Endothelial cell of umbilical vein (primary cell): ENCODE measurements at regions of chr1 and their contacts with region 1.

Region 1: DNA sequence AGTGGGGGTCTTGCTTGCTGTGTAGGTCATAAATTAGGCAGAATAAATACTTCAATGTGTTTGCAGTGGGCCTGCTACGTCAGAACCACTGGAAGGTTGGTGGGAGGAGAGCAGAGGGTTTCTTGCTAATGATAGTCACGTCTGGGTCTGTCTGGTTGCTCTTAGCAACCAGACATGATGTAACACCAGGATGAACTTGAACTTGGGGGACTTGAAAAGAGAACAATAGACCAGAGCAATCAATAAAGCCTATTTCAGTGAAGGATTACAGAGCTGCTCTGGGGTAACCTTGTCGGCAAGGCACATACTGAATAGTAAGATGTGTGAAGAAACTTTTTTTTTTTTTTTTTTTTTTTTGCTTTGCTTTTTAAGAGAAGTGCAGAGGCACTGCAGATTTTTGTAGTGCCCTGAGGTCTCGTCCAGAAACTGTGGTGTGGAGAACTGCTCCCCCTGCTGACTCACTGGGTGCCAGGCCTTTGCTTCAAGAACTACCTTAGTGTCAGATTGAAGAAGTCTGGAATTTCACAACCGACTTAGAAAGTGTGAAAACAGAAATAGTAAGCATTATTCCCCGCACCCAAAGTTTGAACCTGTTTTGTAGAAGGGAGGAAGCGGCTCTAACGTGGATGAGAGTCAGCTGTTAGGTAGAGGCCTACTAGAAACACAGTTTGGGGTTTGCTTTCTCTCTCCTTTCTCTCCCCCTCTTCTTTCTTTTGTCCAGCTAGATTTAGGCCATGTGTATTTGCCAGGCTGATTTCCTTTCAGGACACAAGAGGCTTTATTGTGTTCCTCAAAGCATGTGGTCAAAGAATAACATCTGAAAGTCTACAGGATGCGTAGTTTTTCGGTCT is 271.6 kb downstream of the TM2D1 start:
- DNase-seq: peak; percentile 97
- H3K4me3 ChIP-seq: no peak overlapping the region
- H3K27ac ChIP-seq: peak overlapping the region; percentile 89
- H3K4me1 ChIP-seq: peaks cover 39% of the 10 kb centered on the region
- H3K27me3 ChIP-seq: no peaks in the 10 kb centered on the region
- CTCF ChIP-seq: peak; percentile 75 to 79
- POLR2A ChIP-seq: peak; percentile 35

Region 2: GRCh38 chr1:59971464-59971911 is 1481.8 kb before region 1 on chr1:
- CTCF ChIA-PET with region 1: interaction called, 5 read pairs
- POLR2A ChIA-PET with region 1: no interaction called
- dilution Hi-C with region 1: no loop called
- intact Hi-C with region 1: loop called (anchors 10 kb)
- DNase-seq: peak; percentile 63
- H3K4me3 ChIP-seq: no peak overlapping the region
- H3K27ac ChIP-seq: no peak overlapping the region
- H3K4me1 ChIP-seq: peaks cover 2% of the 10 kb centered on the region
- H3K27me3 ChIP-seq: peaks cover 0 to 11% of the 10 kb centered on the region in 2 experiments
- CTCF ChIP-seq: peak; percentile 83 to 91
- POLR2A ChIP-seq: no peak

Region 3: DNA sequence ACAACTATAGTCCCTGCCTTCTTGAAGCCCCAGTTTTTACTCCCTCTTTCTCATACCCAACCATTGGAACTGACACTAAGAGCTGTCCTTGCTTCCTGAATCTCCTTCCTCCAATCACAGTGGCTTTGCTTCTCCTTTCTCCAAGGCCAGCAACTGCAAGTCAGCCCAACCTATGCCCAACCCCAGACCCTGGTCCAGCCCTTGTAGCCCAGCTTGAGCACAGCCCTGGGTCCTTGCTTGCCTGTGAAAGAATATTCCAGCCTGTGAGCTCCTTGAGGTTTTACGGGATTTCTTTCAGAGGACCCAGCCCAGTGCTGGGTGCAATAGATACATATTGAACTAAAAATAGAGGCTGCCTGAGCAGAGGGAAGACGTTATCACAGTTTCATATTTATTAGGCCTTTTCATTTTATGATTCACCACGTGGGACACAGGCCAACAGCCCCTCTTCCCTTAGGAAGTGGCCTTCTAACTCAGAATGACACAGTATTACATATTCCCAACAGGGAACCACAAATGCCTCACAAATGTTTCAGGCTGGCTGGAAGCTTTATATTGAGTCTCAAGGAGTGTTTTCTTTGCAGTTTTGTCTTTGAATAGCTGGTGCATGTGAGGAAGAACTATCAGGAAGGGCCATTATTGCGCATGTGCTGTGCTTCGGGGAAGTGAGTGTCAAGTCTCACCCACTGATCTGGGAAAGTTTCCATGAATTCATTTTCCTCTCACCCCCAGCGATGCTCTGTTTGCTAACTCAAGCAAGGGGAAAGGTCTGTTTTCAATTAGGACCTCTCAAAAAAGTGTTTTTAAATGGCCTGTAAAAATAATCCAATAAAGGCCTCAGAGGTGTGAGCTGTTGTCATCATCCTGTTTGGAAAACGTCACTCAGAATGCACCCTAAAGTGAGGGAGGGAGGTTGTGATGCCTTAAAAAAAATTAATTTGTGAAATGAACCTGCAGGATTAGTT is 463.3 kb before region 1 on chr1:
- CTCF ChIA-PET with region 1: no interaction called
- POLR2A ChIA-PET with region 1: no interaction called
- dilution Hi-C with region 1: no loop called
- intact Hi-C with region 1: loop called (anchors 1 kb)
- DNase-seq: peak; percentile 97
- H3K4me3 ChIP-seq: no peak overlapping the region
- H3K27ac ChIP-seq: peak overlapping the region; percentile 51
- H3K4me1 ChIP-seq: peaks cover 21% of the 10 kb centered on the region
- H3K27me3 ChIP-seq: no peaks in the 10 kb centered on the region
- CTCF ChIP-seq: no peak
- POLR2A ChIP-seq: no peak

Region 4: GRCh38 chr1:61184040-61184713 is 269.2 kb before region 1 on chr1:
- CTCF ChIA-PET with region 1: no interaction called
- POLR2A ChIA-PET with region 1: interaction called, 4 read pairs
- dilution Hi-C with region 1: no loop called
- intact Hi-C with region 1: loop called (anchors 1 kb)
- DNase-seq: peak; percentile 97
- H3K4me3 ChIP-seq: peak overlapping the region in 2 of 3 experiments; percentile 12 to 42
- H3K27ac ChIP-seq: peak overlapping the region; percentile 14
- H3K4me1 ChIP-seq: peaks cover 27% of the 10 kb centered on the region
- H3K27me3 ChIP-seq: no peaks in the 10 kb centered on the region
- CTCF ChIP-seq: no peak
- POLR2A ChIP-seq: peak; percentile 14

Region 5: DNA sequence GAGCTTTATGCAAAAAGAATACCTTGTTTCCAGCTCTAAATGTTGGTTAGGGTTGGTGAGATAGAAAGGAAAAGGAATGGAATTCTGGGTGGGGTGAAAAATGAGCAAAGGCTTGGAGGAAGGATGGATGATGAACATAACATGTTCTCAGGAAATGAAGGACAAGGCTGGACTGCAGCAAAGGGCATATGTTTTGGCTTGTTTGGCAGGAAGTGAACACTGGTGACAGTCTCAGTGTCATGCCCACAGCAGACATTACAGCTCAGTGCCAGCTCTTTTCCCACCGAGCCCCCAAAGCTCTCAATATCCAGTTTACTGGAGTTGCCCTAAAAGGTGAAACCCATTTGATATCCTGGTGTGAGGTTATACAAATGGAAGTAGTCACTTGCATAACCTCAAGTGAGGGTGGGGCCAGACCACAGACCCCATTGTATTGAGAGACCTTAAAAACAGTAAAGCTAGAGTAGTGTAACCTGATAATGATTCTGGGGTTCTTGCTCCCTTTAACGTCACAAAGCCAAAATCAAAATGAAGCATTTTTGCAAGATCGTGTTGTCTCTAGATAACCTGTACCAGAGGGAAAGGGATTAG is 100.4 kb before region 1 on chr1:
- CTCF ChIA-PET with region 1: interaction called, 6 read pairs
- POLR2A ChIA-PET with region 1: no interaction called
- dilution Hi-C with region 1: no loop called
- intact Hi-C with region 1: loop called (anchors 2 kb)
- DNase-seq: no peak
- H3K4me3 ChIP-seq: no peak overlapping the region
- H3K27ac ChIP-seq: no peak overlapping the region
- H3K4me1 ChIP-seq: peaks cover 18% of the 10 kb centered on the region
- H3K27me3 ChIP-seq: no peaks in the 10 kb centered on the region
- CTCF ChIP-seq: no peak
- POLR2A ChIP-seq: no peak

Region 6: DNA sequence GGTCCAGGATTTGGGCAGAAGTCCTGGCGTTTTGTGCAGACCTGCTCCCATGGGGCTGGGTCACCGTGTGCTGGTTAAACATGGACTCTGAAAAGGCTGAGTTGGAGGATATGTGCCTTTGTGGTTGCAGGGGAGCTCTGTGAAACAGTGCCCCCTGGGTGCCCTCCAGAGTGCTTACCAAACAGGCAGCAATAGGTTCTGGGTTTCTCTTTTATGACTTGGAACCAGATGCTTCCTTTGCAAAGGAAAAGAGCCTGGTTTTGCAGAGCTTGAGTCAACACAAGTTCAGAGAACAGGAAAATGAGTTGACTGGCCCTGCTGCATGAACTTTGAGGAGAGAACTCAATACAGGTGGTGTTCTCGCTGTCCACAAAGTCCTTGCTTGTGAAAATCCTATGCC is 17.3 kb before region 1 on chr1:
- CTCF ChIA-PET with region 1: interaction called, 34 read pairs
- POLR2A ChIA-PET with region 1: no interaction called
- dilution Hi-C with region 1: no loop called
- intact Hi-C with region 1: loop called (anchors 1 kb)
- DNase-seq: peak; percentile 98
- H3K4me3 ChIP-seq: no peak overlapping the region
- H3K27ac ChIP-seq: peak overlapping the region; percentile 94
- H3K4me1 ChIP-seq: peaks cover 42% of the 10 kb centered on the region
- H3K27me3 ChIP-seq: no peaks in the 10 kb centered on the region
- CTCF ChIP-seq: peak; percentile 80 to 81
- POLR2A ChIP-seq: peak; percentile 67

Region 7: GRCh38 chr1:61539720-61540462 is 86.6 kb after region 1 on chr1:
- CTCF ChIA-PET with region 1: no interaction called
- POLR2A ChIA-PET with region 1: no interaction called
- dilution Hi-C with region 1: no loop called
- intact Hi-C with region 1: no loop called
- DNase-seq: no peak
- H3K4me3 ChIP-seq: no peak overlapping the region
- H3K27ac ChIP-seq: no peak overlapping the region
- H3K4me1 ChIP-seq: no peaks in the 10 kb centered on the region
- H3K27me3 ChIP-seq: no peaks in the 10 kb centered on the region
- CTCF ChIP-seq: no peak
- POLR2A ChIP-seq: no peak

Region 8: DNA sequence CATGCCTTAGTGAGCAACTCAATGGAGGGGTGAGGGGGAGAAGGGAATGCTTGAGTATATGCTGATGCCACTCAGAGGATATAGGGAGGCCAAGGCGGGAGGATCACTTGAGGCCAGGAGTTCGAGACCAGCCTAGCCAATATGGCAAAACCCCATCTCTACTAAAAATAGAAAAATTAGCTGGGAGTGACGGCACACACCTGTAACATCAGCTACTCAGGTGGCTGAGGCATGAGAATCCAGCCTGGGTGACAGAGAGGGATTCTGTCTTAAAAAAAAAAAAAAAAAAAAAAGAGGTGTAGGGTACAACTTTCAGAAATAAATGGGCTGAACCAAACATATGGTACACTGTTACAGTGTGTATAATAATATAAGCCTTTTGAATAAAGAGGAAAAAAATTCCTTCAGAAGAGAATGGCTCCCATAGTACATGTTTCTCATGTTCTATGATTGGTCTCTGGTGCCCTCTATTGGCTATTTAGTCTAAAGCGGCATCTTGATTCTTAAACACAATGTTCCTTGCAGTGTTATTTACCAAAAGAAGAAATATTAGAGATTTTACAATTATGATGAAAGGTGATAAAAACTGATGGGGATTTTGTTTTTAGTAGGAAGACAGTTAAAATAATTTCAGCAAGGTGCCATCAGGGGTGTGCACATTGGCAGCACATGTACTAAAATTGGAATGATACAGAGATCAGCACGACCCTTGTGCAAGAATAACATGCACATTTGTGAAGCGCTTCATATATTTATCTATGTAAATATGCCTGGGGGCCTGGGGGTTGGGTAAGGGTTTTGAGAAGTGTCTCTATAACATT is 398.7 kb after region 1 on chr1:
- CTCF ChIA-PET with region 1: interaction called, 8 read pairs
- POLR2A ChIA-PET with region 1: no interaction called
- dilution Hi-C with region 1: no loop called
- intact Hi-C with region 1: loop called (anchors 1 kb)
- DNase-seq: peak; percentile 74
- H3K4me3 ChIP-seq: no peak overlapping the region
- H3K27ac ChIP-seq: peak overlapping the region; percentile 45
- H3K4me1 ChIP-seq: peaks cover 14% of the 10 kb centered on the region
- H3K27me3 ChIP-seq: no peaks in the 10 kb centered on the region
- CTCF ChIP-seq: peak; percentile 40 to 58
- POLR2A ChIP-seq: no peak